IMR-90 (cell line): ENCODE measurements at regions of chr1 and their contacts with region 1.

Region 1: DNA sequence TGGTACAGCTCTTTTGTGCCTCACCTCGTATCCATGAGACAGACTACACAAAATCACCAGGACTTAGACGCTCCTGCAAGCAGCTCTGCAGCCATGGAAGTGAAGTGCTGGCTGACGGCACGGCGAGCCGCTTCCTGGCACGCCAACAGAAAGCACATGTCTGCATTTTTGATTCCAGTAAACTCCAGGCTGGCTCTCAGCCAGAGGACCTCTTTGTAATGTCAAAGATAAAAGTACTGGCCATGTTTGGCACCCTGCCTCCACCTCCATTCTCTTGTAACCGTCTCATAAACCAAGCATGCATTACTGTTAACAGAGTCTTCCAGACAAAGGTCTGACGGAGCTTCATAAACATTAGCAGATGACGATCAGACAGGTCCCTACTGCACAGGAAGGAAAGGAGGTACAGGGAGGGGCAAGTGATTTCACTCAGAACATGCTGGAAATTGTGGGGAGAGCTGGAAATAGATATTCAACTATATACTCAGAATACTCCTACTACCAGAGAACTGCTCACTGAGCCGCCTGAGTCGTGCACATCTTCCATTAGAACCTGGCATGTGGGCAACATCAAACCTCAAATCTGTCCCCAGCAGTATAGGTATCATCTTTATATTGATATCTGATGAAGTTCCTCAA is 632.0 kb downstream of the SMYD3 start:
- DNase-seq: peak; percentile 100
- ATAC-seq: peak; percentile 74
- H3K4me3 ChIP-seq: no peak overlapping the region
- H3K27ac ChIP-seq: peak overlapping the region; percentile 91
- H3K4me1 ChIP-seq: peaks cover 45% of the 10 kb centered on the region
- H3K27me3 ChIP-seq: no peaks in the 10 kb centered on the region
- CTCF ChIP-seq: no peak
- POLR2A ChIP-seq: no peak
- RAD21 ChIP-seq: peak; percentile 3; the same call in 1 of the 2 replicates

Region 2: GRCh38 chr1:245986404-245987220 is 111.6 kb after region 1 on chr1:
- CTCF ChIA-PET with region 1: no interaction called
- POLR2A ChIA-PET with region 1: no interaction called
- dilution Hi-C with region 1: no loop called
- in situ Hi-C with region 1: no loop called
- intact Hi-C with region 1: loop called (anchors 5 kb)
- DNase-seq: peak; percentile 88
- ATAC-seq: peak; percentile 72
- H3K4me3 ChIP-seq: no peak overlapping the region
- H3K27ac ChIP-seq: peak overlapping the region; percentile 76
- H3K4me1 ChIP-seq: peaks cover 16% of the 10 kb centered on the region
- H3K27me3 ChIP-seq: no peaks in the 10 kb centered on the region
- CTCF ChIP-seq: no peak
- POLR2A ChIP-seq: no peak
- RAD21 ChIP-seq: no peak